Activated CD8-positive, alpha-beta T cell treated with anti-CD3 and anti-CD28 coated beads for 36 hours (primary cell): ENCODE measurements at regions of chr14 and their contacts with region 1.

Region 1: DNA sequence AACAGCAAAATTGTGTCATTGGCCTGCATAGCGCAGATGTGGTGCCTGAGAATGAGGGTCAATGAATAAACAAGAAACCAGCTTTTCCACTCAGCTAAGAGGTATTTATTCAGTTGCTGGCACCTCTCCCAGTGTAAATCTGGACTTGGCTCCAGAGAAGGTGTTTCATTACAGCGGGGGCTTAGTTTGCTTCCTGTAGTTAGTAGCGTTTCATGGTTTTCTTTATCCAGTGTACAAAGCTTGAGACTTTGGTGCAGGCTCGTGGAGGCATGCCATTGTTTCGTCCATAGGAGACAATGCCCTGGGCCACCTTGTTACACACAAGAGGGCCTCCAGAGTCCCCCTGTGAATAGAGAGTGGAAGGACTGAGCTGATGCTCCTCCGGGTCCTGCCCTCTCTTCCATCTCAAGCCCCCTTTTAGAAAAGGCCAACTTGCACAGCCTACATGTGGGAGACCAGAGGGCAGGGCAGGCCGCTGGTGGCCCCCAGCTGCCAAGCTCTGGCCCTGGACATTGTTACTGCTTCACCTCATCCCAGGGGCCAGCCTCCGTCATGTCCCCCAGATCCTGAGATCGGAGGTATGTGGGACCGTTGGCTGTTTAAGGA is 3.0 kb downstream of the GZMB start:
- DNase-seq: no peak
- ATAC-seq: no peak
- H3K4me3 Mint-ChIP-seq: peak overlapping the region; percentile 93
- H3K27ac Mint-ChIP-seq: peak overlapping the region; percentile 95
- H3K4me1 Mint-ChIP-seq: peaks cover 43% of the 10 kb centered on the region
- H3K27me3 Mint-ChIP-seq: no peaks in the 10 kb centered on the region
- CTCF ChIP-seq: no peak

Region 2: DNA sequence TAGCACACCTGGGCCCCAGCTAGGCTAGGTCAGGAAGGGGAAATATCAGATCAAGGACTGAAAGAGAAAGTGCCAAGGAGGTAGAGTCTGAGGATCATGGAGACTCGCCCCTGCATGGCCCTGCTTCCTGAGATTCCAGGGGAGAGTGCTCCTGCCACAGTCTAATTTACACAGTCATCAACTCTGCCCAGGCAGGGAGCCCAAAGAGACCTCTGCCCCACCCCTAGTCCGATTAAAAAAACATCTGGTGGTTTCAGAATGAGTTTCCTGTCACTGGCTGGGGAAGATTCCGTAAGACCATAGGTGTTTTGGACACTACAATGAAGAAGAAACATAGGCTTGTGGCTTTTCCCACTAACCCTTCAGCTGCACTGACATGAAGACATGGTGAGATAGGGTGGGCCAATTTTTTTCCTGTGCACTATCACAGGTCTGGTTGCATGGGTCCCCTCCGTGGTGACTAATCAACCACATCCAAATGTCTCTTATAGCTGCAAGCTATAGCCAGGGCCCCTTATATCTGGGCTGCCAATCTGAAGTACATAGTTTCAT is 34.5 kb after region 1 on chr14:
- CTCF ChIA-PET with region 1: interaction called, 5 read pairs
- POLR2A ChIA-PET with region 1: interaction called, 8 read pairs
- intact Hi-C with region 1: loop called (anchors 2 kb)
- DNase-seq: peak; percentile 90
- ATAC-seq: peak; percentile 87
- H3K4me3 Mint-ChIP-seq: peak overlapping the region; percentile 60
- H3K27ac Mint-ChIP-seq: peak overlapping the region; percentile 93
- H3K4me1 Mint-ChIP-seq: peaks cover 91% of the 10 kb centered on the region
- H3K27me3 Mint-ChIP-seq: no peaks in the 10 kb centered on the region
- CTCF ChIP-seq: no peak

Region 3: DNA sequence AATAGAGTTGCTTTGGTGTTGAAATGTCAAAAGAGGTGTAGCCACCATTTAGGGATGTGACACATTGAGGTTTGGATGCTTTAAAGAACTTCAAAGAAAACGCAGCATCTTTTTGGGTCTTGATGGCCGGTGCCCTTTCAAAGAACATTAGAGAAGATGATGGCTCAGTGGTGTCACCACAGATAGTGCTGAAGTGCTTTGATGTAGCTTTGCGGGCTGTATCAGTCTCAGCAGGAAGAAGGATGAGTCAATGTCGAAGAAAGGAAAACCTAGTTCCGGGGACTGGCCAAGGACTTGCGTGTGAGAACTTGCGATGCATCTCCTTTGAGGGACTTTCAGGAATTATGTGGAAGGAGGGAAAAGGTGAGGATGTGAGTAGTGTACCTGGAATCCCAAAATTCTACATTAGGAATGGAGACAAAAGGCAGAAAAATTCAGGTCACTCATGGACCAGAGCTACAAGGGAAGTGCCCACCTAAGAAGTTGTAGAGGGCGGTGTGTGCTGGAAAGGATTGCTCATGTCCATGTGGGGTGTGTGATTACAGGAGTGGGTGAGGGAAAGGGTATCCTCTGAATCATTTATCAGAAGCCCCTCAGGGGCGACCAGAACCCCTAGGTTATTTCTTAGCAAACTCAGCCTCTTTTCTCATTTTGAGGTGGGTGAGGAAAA is 42.7 kb after region 1 on chr14:
- CTCF ChIA-PET with region 1: interaction called, 20 read pairs
- POLR2A ChIA-PET with region 1: interaction called, 18 read pairs
- intact Hi-C with region 1: loop called (anchors 1 kb)
- DNase-seq: peak; percentile 91
- ATAC-seq: peak; percentile 65
- H3K4me3 Mint-ChIP-seq: peak overlapping the region; percentile 71
- H3K27ac Mint-ChIP-seq: peak overlapping the region; percentile 99
- H3K4me1 Mint-ChIP-seq: peaks cover 85% of the 10 kb centered on the region
- H3K27me3 Mint-ChIP-seq: no peaks in the 10 kb centered on the region
- CTCF ChIP-seq: no peak

Region 4: DNA sequence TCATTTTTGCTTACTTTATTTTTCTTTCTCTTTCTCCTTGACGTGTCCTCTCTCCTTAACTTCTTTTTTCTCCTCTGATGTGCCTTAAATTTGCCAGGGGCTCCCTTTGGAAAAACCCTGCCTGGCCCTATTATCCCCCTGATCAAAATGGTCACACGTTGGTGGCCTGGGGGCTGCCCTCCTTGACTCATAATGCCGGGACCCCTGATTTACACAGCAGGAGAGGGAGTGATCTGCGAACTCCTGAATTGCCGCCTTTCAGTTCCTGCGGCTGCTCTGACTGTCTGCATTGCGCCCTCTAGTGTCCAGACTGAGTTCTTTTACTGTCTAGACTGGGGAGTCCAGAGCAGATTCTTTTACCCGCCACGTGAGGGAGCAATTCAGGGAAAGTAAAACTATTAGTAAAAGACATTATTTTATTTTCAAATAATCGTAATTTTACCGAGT is 47.8 kb after region 1 on chr14:
- CTCF ChIA-PET with region 1: interaction called, 20 read pairs
- POLR2A ChIA-PET with region 1: interaction called, 18 read pairs
- intact Hi-C with region 1: no loop called
- DNase-seq: peak; percentile 85
- ATAC-seq: peak; percentile 42
- H3K4me3 Mint-ChIP-seq: peak overlapping the region; percentile 81
- H3K27ac Mint-ChIP-seq: peak overlapping the region; percentile 96
- H3K4me1 Mint-ChIP-seq: peaks cover 64% of the 10 kb centered on the region
- H3K27me3 Mint-ChIP-seq: no peaks in the 10 kb centered on the region
- CTCF ChIP-seq: peak; percentile 99

Region 5: GRCh38 chr14:24690492-24690891 is 59.5 kb after region 1 on chr14:
- CTCF ChIA-PET with region 1: interaction called, 3 read pairs
- POLR2A ChIA-PET with region 1: interaction called, 5 read pairs
- intact Hi-C with region 1: loop called (anchors 5 kb)
- DNase-seq: peak; percentile 51
- ATAC-seq: no peak
- H3K4me3 Mint-ChIP-seq: no peak overlapping the region
- H3K27ac Mint-ChIP-seq: no peak overlapping the region
- H3K4me1 Mint-ChIP-seq: peaks cover 32% of the 10 kb centered on the region
- H3K27me3 Mint-ChIP-seq: no peaks in the 10 kb centered on the region
- CTCF ChIP-seq: peak; percentile 21

Region 6: GRCh38 chr14:24761141-24761540 is 130.2 kb after region 1 on chr14:
- CTCF ChIA-PET with region 1: no interaction called
- POLR2A ChIA-PET with region 1: no interaction called
- intact Hi-C with region 1: no loop called
- DNase-seq: no peak
- ATAC-seq: no peak
- H3K4me3 Mint-ChIP-seq: no peak overlapping the region
- H3K27ac Mint-ChIP-seq: no peak overlapping the region
- H3K4me1 Mint-ChIP-seq: no peaks in the 10 kb centered on the region
- H3K27me3 Mint-ChIP-seq: peaks cover 17% of the 10 kb centered on the region
- CTCF ChIP-seq: no peak